Heart right ventricle (tissue), 16 donors: ENCODE measurements at regions of chr16 and their contacts with region 1.

Region 1: GRCh38 chr16:21565861-21566669 is 33.3 kb upstream of the METTL9 start:
- DNase-seq: no peak
- ATAC-seq: no peak
- H3K4me3 ChIP-seq: no peak overlapping the region
- H3K27ac ChIP-seq: no peak overlapping the region
- H3K4me1 ChIP-seq: peaks cover 0 to 5% (median 0%) of the 10 kb centered on the region in 9 donors
- H3K27me3 ChIP-seq: peaks cover 0 to 8% (median 0%) of the 10 kb centered on the region in 7 donors
- CTCF ChIP-seq: no peak

Region 2: DNA sequence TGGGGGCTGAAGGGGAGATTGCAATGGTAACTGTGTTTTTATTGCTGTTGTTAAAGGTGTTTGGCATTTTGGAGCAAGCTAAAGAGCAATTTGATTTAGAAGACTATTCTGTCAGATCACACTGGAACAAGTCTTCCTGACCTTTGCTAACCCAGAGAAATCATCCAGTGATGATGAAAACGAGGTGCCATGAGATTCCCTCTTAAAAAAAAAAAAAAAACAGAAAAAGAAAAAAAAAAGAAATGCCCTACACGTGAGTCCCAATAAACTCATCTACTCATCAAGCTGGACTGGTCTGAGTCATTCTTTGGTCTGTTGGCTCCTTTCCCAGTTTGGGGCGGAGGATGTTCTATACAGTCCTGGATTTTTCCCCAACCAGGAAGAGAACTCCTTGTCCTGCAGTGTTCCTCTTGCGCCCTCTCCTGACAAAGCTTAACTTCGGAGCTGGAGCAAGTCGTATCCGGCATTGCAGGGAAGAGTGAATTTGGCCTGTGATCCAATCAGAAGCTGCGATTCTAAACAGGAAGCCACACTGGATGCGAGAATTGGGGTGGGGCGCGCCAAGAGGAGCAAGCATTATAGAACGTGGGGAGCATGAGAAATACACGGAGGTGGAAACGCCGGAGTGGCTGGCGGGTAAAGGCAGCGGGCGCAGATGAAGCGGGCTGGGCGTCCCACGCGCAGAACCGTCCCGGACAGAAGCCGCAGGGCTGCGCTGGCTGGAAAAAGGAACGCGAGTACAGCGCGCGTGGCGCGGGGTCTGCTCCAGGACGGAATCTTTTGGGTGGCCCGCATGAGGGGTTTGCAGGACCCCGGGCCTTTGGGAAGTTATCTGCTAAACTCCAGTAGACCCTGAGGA is 265.5 kb before region 1 on chr16:
- intact Hi-C with region 1: loop called in 1 of 10 experiments (anchors 10 kb)
- DNase-seq: peak; percentile 72 to 98
- ATAC-seq: peak; percentile 93 to 99 (median 96)
- H3K4me3 ChIP-seq: peak overlapping the region; percentile 7 to 79 (median 64)
- H3K27ac ChIP-seq: peak overlapping the region; percentile 14 to 87 (median 73)
- H3K4me1 ChIP-seq: peaks cover 0 to 19% (median 7%) of the 10 kb centered on the region in 9 donors
- H3K27me3 ChIP-seq: peaks cover 0 to 22% (median 0%) of the 10 kb centered on the region in 7 donors
- CTCF ChIP-seq: peak; percentile 62 to 97 (median 82)

Region 3: DNA sequence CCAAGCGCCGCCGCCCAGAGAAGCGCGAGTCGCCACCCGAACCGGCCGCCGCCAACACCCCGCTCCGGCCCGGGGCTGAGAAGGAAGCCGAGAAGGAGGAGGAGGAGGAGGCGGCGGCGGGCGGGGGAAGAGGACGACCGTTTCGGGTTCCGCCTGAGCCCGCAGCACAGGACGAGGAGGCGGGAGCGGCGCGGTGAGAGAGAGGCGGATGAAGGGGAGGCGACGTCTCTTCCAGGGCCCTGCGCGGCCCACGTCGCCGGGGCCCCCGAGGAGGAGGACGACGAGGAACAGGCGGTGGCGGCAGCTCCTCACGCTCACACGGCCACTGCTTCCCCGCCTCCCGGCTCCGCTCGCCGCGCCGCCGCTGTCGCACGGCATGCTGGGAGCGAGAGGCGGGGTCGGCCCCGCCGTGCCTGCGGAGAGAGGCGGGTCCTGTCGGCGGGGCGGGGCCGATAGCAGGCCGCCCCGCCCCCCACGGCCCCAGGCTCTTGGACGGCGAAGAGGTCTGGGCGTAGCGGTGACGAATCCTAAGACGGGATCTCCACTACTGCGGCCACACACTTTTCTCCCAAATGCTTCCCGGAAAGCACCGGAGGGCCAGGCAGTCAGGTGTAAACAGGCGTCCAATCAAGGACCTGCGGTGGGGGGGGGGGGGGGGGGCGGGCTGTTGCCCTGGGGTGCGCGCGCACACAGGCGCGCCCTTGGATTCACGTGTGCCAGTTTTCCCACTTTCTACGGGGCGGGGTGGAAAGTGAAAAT is 64.0 kb before region 1 on chr16:
- intact Hi-C with region 1: loop called in 1 of 10 experiments (anchors 10 kb)
- DNase-seq: peak; percentile 92 to 97
- ATAC-seq: peak; percentile 97 to 98 (median 98)
- H3K4me3 ChIP-seq: peak overlapping the region; percentile 68 to 100 (median 90)
- H3K27ac ChIP-seq: peak overlapping the region; percentile 78 to 99 (median 96)
- H3K4me1 ChIP-seq: peaks cover 4 to 36% (median 19%) of the 10 kb centered on the region in 9 donors
- H3K27me3 ChIP-seq: no peaks in the 10 kb centered on the region
- CTCF ChIP-seq: peak in 3 of 9 donors; percentile 24 to 28 (median 25)

Region 4: GRCh38 chr16:21526923-21527807 is 38.9 kb before region 1 on chr16:
- intact Hi-C with region 1: no loop called
- DNase-seq: no peak
- ATAC-seq: no peak
- H3K4me3 ChIP-seq: no peak overlapping the region
- H3K27ac ChIP-seq: no peak overlapping the region
- H3K4me1 ChIP-seq: no peaks in the 10 kb centered on the region
- H3K27me3 ChIP-seq: no peaks in the 10 kb centered on the region
- CTCF ChIP-seq: no peak

Region 5: GRCh38 chr16:21590287-21590686 is 24.2 kb after region 1 on chr16:
- intact Hi-C with region 1: no loop called
- DNase-seq: no peak
- ATAC-seq: no peak
- H3K4me3 ChIP-seq: no peak overlapping the region
- H3K27ac ChIP-seq: peak overlapping the region in 1 of 10 donors; percentile 10
- H3K4me1 ChIP-seq: peaks cover 0 to 32% (median 0%) of the 10 kb centered on the region in 9 donors
- H3K27me3 ChIP-seq: no peaks in the 10 kb centered on the region
- CTCF ChIP-seq: no peak

Region 6: GRCh38 chr16:22694887-22695382 is 1128.9 kb after region 1 on chr16:
- intact Hi-C with region 1: loop called in 1 of 10 experiments (anchors 5 kb)
- DNase-seq: peak in 1 of 2 donors; percentile 44
- ATAC-seq: peak; percentile 75 to 94 (median 89)
- H3K4me3 ChIP-seq: no peak overlapping the region
- H3K27ac ChIP-seq: peak overlapping the region in 9 of 10 donors; percentile 13 to 56 (median 34)
- H3K4me1 ChIP-seq: peaks cover 0 to 17% (median 6%) of the 10 kb centered on the region in 9 donors
- H3K27me3 ChIP-seq: no peaks in the 10 kb centered on the region
- CTCF ChIP-seq: no peak